ENCODE measurements at regions of chr11 and their contacts with region 1.

Region 1: GRCh38 chr11:115324581-115325432 is 179.4 kb downstream of the CADM1 start:
- DNase-seq: peak in 7 of 9 donors; percentile 9 to 34 (median 21)
- ATAC-seq: peak; percentile 59
- H3K4me3 ChIP-seq: no peak overlapping the region
- H3K4me3 Mint-ChIP-seq: peak overlapping the region in 1 of 10 donors; percentile 20
- H3K27ac ChIP-seq: no peak overlapping the region
- H3K27ac Mint-ChIP-seq: no peak overlapping the region
- H3K4me1 ChIP-seq: no peaks in the 10 kb centered on the region
- H3K4me1 Mint-ChIP-seq: peaks cover 0 to 9% (median 0%) of the 10 kb centered on the region in 7 donors
- H3K27me3 ChIP-seq: no peaks in the 10 kb centered on the region
- H3K27me3 Mint-ChIP-seq: peaks cover 4 to 9% (median 7%) of the 10 kb centered on the region in 5 donors

Region 2: GRCh38 chr11:115368616-115369015 is 43.8 kb after region 1 on chr11:
- CTCF ChIA-PET with region 1: no interaction called
- POLR2A ChIA-PET with region 1: no interaction called
- intact Hi-C with region 1: no loop called
- DNase-seq: no peak
- ATAC-seq: no peak
- H3K4me3 ChIP-seq: no peak overlapping the region
- H3K4me3 Mint-ChIP-seq: no peak overlapping the region
- H3K27ac ChIP-seq: no peak overlapping the region
- H3K27ac Mint-ChIP-seq: no peak overlapping the region
- H3K4me1 ChIP-seq: no peaks in the 10 kb centered on the region
- H3K4me1 Mint-ChIP-seq: no peaks in the 10 kb centered on the region
- H3K27me3 ChIP-seq: no peaks in the 10 kb centered on the region
- H3K27me3 Mint-ChIP-seq: peaks cover 0 to 6% (median 0%) of the 10 kb centered on the region in 5 donors

Region 3: DNA sequence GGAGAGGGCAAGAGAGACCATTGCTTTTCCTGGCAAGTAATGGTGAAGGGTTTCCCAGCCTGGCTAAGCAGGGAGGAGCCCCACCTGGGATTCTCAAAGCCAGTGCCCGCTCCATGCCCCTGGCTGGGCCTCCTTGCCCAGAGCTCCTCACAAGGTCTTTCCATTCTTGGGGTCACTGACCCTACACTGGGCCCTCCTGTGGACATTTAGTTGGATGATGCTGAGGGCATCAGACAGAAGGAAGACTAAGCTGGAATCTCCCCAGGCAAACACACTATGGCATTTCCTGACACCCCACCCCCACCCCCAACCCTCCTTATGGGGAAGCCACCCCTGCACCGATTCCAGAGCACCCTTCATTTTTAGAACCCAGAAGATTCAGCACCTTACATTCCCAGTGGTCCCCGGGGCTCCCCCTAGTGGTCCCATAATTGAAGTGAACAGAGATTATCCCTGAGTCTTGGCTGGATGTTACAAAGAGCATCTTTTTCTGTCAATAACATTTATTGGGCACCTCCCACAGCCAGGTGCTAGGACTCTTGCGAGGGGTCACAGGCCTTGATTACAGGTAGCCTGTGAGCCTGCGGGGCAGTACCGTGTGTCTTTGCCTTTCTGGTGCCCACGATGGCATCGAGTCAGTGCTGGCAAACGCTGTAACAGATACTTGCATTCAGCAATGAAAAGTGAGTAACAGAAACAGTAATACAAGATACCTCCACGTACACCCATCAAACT is 899.5 kb after region 1 on chr11:
- CTCF ChIA-PET with region 1: no interaction called
- POLR2A ChIA-PET with region 1: no interaction called
- intact Hi-C with region 1: loop called in 1 of 2 experiments (anchors 2 kb)
- DNase-seq: peak in 3 of 9 donors; percentile 9 to 34 (median 10)
- ATAC-seq: peak; percentile 48
- H3K4me3 ChIP-seq: no peak overlapping the region
- H3K4me3 Mint-ChIP-seq: no peak overlapping the region
- H3K27ac ChIP-seq: no peak overlapping the region
- H3K27ac Mint-ChIP-seq: no peak overlapping the region
- H3K4me1 ChIP-seq: no peaks in the 10 kb centered on the region
- H3K4me1 Mint-ChIP-seq: no peaks in the 10 kb centered on the region
- H3K27me3 ChIP-seq: no peaks in the 10 kb centered on the region
- H3K27me3 Mint-ChIP-seq: peaks cover 0 to 34% (median 23%) of the 10 kb centered on the region in 5 donors

Region 4: GRCh38 chr11:116276051-116277044 is 951.5 kb after region 1 on chr11:
- CTCF ChIA-PET with region 1: no interaction called
- POLR2A ChIA-PET with region 1: no interaction called
- intact Hi-C with region 1: loop called in 1 of 2 experiments (anchors 1 kb)
- DNase-seq: peak; percentile 33 to 78 (median 51)
- ATAC-seq: peak; percentile 68
- H3K4me3 ChIP-seq: no peak overlapping the region
- H3K4me3 Mint-ChIP-seq: peak overlapping the region in 4 of 10 donors; percentile 8 to 30 (median 20)
- H3K27ac ChIP-seq: no peak overlapping the region
- H3K27ac Mint-ChIP-seq: no peak overlapping the region
- H3K4me1 ChIP-seq: no peaks in the 10 kb centered on the region
- H3K4me1 Mint-ChIP-seq: peaks cover 0 to 3% (median 0%) of the 10 kb centered on the region in 7 donors
- H3K27me3 ChIP-seq: no peaks in the 10 kb centered on the region
- H3K27me3 Mint-ChIP-seq: peaks cover 0 to 26% (median 15%) of the 10 kb centered on the region in 5 donors

Region 5: GRCh38 chr11:116499396-116500003 is 1174.7 kb after region 1 on chr11:
- CTCF ChIA-PET with region 1: no interaction called
- POLR2A ChIA-PET with region 1: no interaction called
- intact Hi-C with region 1: loop called in 1 of 2 experiments (anchors 5 kb)
- DNase-seq: peak in 1 of 9 donors; percentile 58
- ATAC-seq: no peak
- H3K4me3 ChIP-seq: no peak overlapping the region
- H3K4me3 Mint-ChIP-seq: no peak overlapping the region
- H3K27ac ChIP-seq: no peak overlapping the region
- H3K27ac Mint-ChIP-seq: no peak overlapping the region
- H3K4me1 ChIP-seq: no peaks in the 10 kb centered on the region
- H3K4me1 Mint-ChIP-seq: peaks cover 0 to 4% (median 0%) of the 10 kb centered on the region in 7 donors
- H3K27me3 ChIP-seq: no peaks in the 10 kb centered on the region
- H3K27me3 Mint-ChIP-seq: peaks cover 34 to 68% (median 45%) of the 10 kb centered on the region in 5 donors

Measured in naive thymus-derived CD4-positive, alpha-beta T cell (primary cell).